ENCODE measurements at regions of chr20 and their contacts with region 1.

Region 1: DNA sequence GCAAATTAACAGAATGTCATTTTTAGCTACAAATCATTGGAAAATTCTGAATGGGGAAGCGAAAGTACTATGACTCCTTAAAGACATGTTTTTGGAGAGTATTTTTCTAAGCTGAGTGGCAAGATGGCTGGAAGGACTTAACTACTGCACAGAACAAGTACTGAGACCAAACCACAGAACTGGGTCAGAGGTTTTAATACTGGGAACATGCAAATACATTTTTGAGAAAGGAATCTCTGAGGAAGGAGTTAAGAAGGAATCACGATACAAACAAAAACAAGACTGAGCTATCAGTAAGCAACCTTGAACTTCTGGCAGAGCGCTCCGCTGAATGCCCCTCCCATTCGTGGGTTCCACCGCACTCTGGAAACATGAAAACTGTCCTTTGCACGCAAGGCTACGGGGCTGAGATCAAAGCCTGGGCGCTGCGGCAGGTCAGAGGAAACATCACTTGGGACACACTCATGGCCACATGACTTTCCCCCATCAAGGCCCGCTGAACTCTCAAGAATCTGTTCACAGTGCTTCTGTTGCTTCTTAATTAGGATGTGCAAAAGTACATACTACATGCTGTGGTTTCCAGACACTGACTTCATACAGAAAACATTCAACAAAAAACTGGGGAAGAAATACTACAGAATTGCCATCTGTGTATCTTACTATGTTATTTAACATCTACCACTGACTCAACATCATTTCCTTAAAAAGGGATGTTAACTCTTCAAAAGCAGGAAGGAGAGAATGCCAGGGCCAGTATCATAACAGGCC is 27.8 kb downstream of the SLC23A2 start:
- DNase-seq: peak in 3 of 5 donors; percentile 13 to 39 (median 20)
- ATAC-seq: peak; percentile 37 to 72 (median 53)
- H3K4me3 ChIP-seq: peak overlapping the region in 9 of 12 donors; percentile 4 to 52 (median 30)
- H3K27ac ChIP-seq: peak overlapping the region in 9 of 12 donors; percentile 3 to 83 (median 44)
- H3K4me1 ChIP-seq: peaks cover 0 to 26% (median 18%) of the 10 kb centered on the region in 12 donors
- H3K27me3 ChIP-seq: no peaks in the 10 kb centered on the region
- CTCF ChIP-seq: no peak
- POLR2A ChIP-seq: no peak

Region 2: DNA sequence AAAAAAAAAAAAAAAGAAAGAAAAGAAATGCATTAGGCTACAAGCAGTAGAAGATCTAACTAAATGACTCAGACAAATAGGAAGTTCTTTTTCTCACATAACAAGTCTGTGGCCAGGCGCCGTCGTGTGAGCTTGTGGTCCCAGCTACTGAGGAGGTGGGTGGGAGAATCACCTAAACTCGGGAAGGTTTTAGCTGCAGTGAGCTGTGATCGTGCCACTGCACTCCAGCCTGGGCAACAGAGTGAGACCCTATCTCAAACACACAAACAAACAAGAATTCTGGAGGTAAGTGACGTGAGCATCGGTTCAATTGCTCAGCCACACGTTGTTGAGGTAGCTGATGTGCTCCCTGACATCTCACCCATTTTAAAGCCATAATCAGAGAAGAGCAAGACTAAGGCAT is 65.7 kb after region 1 on chr20:
- intact Hi-C with region 1: loop called in 1 of 10 experiments (anchors 10 kb)
- DNase-seq: no peak
- ATAC-seq: no peak
- H3K4me3 ChIP-seq: no peak overlapping the region
- H3K27ac ChIP-seq: no peak overlapping the region
- H3K4me1 ChIP-seq: no peaks in the 10 kb centered on the region
- H3K27me3 ChIP-seq: peaks cover 0 to 8% (median 0%) of the 10 kb centered on the region in 9 donors
- CTCF ChIP-seq: no peak
- POLR2A ChIP-seq: no peak

Measured in heart left ventricle (tissue), 16 donors.